Activated T-helper 2 cell treated with anti-CD3 and anti-CD28 coated beads, Interferon-gamma antibody, Interleukin-2, Interleukin-4, amounts not matched to agents 10 μg/mL and 5 μg/mL and 100 μg/mL, durations not matched to agents 14 hours and 24 hours and 36 hours (primary cell): ENCODE measurements at regions of chr10 and their contacts with region 1.

Region 1: DNA sequence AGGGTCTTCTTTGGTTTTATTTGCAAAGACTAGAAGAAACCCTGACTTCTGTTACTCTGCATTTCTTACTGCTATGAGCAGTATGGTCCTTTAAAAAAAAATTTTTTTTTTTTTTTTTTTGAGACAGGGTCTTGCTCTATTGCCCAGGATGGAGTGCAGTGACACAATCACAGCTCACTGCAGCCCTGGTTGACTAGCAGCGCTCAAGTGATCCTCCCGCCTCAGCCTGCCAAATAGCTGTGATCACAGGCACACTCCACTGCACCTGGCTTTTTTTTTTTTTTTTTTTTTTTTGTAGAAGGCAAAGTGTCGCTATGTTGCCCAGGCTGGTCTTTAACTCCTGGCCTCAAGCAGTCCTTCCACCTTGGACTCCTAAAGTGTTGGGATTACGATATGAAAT is 17.4 kb downstream of the CNNM2 start:
- DNase-seq: no peak
- H3K4me3 Mint-ChIP-seq: no peak overlapping the region
- H3K27ac Mint-ChIP-seq: peak overlapping the region; percentile 87
- H3K4me1 Mint-ChIP-seq: peaks cover 16% of the 10 kb centered on the region
- H3K27me3 Mint-ChIP-seq: no peaks in the 10 kb centered on the region

Region 2: DNA sequence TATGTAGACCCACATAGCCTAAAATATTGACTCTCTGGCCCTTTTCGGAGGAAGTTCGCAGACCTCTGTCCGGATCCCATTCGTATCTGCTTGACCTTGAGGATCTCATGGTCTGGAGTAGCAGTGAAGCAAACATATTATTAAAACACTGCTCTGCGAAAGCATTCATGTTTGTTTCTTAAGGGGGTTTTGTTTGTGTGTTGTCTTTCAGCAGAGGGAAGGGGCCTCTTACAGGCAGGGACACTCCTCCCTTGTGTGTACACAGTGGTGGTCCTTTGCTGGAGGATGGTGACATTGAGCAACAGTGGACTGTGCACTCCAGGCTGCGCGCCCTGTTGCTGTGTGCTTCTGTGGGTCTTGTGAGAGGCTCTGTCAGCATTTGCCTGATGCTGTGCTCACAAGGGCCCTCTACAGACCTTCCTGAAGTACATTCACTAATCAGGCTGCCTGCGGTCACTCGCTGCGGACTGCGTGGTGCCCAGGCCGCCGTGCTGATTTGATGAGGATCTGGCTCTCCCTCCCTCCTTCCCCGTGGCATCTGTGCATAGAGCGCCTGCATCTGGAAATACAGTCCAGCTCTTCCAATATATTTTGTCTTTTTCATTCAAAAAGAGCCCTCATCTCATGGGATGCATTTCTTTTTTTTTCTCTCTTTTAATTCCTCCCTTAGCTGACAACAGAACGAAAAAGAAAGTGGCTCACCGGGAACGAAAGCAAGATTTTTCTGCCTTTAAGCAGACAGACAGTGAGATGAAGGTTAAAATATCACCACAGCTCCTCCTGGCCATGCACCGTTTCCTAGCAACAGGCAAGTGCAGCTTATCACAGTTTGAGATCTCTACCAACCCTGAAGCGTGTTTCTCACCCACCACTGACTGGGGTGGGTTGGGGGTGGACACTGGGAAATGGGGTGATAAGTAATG is 118.4 kb after region 1 on chr10:
- intact Hi-C with region 1: loop called (anchors 2 kb)
- DNase-seq: peak; percentile 75
- H3K4me3 Mint-ChIP-seq: peak overlapping the region; percentile 80
- H3K27ac Mint-ChIP-seq: peak overlapping the region; percentile 89
- H3K4me1 Mint-ChIP-seq: peaks cover 25% of the 10 kb centered on the region
- H3K27me3 Mint-ChIP-seq: no peaks in the 10 kb centered on the region